Pancreas (tissue), 10 donors: ENCODE measurements at regions of chr3 and their contacts with region 1.

Region 1: GRCh38 chr3:35965908-35966307 is 326.6 kb downstream of the ARPP21 start:
- DNase-seq: no peak
- ATAC-seq: peak in 3 of 4 donors; percentile 62 to 75 (median 66)
- H3K4me3 ChIP-seq: no peak overlapping the region
- H3K27ac ChIP-seq: no peak overlapping the region
- H3K4me1 ChIP-seq: peaks cover 0 to 5% (median 0%) of the 10 kb centered on the region in 3 donors
- H3K27me3 ChIP-seq: no peaks in the 10 kb centered on the region
- CTCF ChIP-seq: peak in 2 of 4 donors; percentile 27 to 42

Region 2: DNA sequence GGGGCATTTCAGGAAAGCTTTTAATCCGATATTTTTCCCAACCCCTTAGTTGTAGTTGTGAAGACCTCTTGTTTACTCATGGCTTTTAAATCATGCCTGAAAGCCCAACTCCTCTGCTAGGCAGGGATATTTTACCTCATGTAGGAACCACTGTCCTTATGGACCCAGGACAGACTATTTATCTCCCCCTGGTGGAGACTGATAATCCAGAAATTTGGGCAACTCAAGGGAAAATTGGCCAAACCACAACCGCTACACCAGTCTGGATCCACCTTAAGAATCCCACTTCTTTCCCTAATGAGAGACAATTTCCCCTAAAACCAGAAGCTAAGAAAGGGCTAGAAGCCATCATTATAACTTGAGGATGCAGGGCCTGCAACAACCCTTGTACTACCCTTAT is 166.3 kb after region 1 on chr3:
- intact Hi-C with region 1: no loop called
- DNase-seq: no peak
- ATAC-seq: no peak
- H3K4me3 ChIP-seq: no peak overlapping the region
- H3K27ac ChIP-seq: no peak overlapping the region
- H3K4me1 ChIP-seq: no peaks in the 10 kb centered on the region
- H3K27me3 ChIP-seq: no peaks in the 10 kb centered on the region
- CTCF ChIP-seq: no peak

Region 3: GRCh38 chr3:36700537-36701248 is 734.8 kb after region 1 on chr3:
- intact Hi-C with region 1: loop called in 2 of 3 experiments (anchors 5 kb)
- DNase-seq: peak in 4 of 6 donors; percentile 8 to 52 (median 28)
- ATAC-seq: peak in 3 of 4 donors; percentile 78 to 84 (median 84)
- H3K4me3 ChIP-seq: no peak overlapping the region
- H3K27ac ChIP-seq: no peak overlapping the region
- H3K4me1 ChIP-seq: no peaks in the 10 kb centered on the region
- H3K27me3 ChIP-seq: no peaks in the 10 kb centered on the region
- CTCF ChIP-seq: peak; percentile 30 to 54 (median 38)